Heart right ventricle (tissue), 16 donors: ENCODE measurements at regions of chrX and their contacts with region 1.

Region 1: GRCh38 chrX:23901805-23902204 is 5.9 kb downstream of the APOO start:
- DNase-seq: peak in 1 of 2 donors; percentile 54
- ATAC-seq: peak; percentile 86 to 95 (median 91)
- H3K4me3 ChIP-seq: peak overlapping the region in 6 of 10 donors; percentile 3 to 43 (median 34)
- H3K27ac ChIP-seq: peak overlapping the region in 9 of 10 donors; percentile 55 to 81 (median 70)
- H3K4me1 ChIP-seq: peaks cover 0 to 49% (median 19%) of the 10 kb centered on the region in 9 donors
- H3K27me3 ChIP-seq: peaks cover 0 to 19% (median 0%) of the 10 kb centered on the region in 7 donors
- CTCF ChIP-seq: peak; percentile 19 to 65 (median 42)

Region 2: DNA sequence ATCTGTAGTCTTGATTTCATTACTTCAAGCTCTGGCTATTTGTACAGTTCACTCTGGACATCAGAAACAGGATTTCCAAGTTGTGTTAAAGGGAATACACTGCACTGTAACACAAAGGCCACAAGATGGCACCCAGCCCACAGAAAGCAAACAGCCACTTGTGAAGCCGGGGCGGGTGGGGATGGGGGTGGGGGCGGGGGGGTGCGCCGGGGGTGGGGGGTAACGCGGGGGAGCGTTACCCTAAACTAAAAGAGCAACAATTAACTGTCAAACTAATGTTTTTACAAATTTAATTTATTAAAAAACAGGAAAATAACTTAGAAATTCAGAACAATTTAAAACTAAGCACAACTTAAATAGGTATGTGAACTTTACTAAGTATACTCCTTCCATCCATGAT is 207.2 kb before region 1 on chrX:
- intact Hi-C with region 1: loop called (anchors 2 to 10 kb)
- DNase-seq: peak in 1 of 2 donors; percentile 49
- ATAC-seq: peak in 3 of 8 donors; percentile 48 to 58 (median 53)
- H3K4me3 ChIP-seq: no peak overlapping the region
- H3K27ac ChIP-seq: no peak overlapping the region
- H3K4me1 ChIP-seq: peaks cover 0 to 3% (median 0%) of the 10 kb centered on the region in 9 donors
- H3K27me3 ChIP-seq: peaks cover 0 to 7% (median 0%) of the 10 kb centered on the region in 7 donors
- CTCF ChIP-seq: peak; percentile 16 to 66 (median 52)

Region 3: GRCh38 chrX:23756157-23756559 is 145.6 kb before region 1 on chrX:
- intact Hi-C with region 1: loop called in 7 of 10 experiments (anchors 1 to 10 kb)
- DNase-seq: peak; percentile 22 to 44
- ATAC-seq: peak in 1 of 8 donors; percentile 31
- H3K4me3 ChIP-seq: no peak overlapping the region
- H3K27ac ChIP-seq: no peak overlapping the region
- H3K4me1 ChIP-seq: peaks cover 0 to 5% (median 0%) of the 10 kb centered on the region in 9 donors
- H3K27me3 ChIP-seq: no peaks in the 10 kb centered on the region
- CTCF ChIP-seq: peak in 8 of 9 donors; percentile 30 to 62 (median 54)

Region 4: DNA sequence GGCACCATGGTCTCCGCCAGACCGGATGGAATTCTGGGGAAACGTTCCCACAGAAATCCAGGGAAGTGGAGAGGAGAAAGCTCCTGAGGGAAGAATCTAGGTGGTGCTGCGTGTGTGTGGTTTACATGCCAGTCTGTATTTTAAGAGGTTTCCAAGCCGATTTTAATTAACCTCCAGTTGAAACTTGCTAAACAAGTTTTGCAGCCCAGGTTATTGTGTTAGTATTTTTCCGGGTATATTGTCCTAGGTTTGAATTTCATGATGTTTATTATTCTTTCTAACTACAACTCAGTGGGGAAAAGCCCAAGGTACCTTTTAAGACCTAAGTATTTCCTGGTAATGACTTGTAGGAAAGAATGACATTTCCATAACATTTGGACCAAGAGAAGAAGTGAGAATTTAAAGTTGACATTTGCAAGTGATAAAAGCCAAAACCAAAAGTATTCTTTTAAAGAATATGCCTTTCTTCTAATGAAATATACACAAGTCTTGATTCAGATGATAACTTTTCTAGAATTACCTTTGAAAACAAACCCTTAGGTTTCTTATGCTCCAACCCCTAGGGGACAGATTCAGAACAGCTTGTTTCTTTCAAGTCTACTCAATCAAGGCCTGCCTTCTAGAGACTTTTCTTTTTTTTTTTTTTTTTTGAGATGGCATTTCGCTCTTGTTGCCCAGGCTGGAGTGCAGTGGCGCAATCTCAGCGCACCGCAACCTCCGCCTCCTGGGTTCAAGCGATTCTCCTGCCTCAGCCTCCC is 104.3 kb before region 1 on chrX:
- intact Hi-C with region 1: loop called in 1 of 10 experiments (anchors 5 kb)
- DNase-seq: no peak
- ATAC-seq: no peak
- H3K4me3 ChIP-seq: no peak overlapping the region
- H3K27ac ChIP-seq: peak overlapping the region in 8 of 10 donors; percentile 25 to 69 (median 57)
- H3K4me1 ChIP-seq: peaks cover 0 to 5% (median 0%) of the 10 kb centered on the region in 9 donors
- H3K27me3 ChIP-seq: no peaks in the 10 kb centered on the region
- CTCF ChIP-seq: no peak

Region 5: DNA sequence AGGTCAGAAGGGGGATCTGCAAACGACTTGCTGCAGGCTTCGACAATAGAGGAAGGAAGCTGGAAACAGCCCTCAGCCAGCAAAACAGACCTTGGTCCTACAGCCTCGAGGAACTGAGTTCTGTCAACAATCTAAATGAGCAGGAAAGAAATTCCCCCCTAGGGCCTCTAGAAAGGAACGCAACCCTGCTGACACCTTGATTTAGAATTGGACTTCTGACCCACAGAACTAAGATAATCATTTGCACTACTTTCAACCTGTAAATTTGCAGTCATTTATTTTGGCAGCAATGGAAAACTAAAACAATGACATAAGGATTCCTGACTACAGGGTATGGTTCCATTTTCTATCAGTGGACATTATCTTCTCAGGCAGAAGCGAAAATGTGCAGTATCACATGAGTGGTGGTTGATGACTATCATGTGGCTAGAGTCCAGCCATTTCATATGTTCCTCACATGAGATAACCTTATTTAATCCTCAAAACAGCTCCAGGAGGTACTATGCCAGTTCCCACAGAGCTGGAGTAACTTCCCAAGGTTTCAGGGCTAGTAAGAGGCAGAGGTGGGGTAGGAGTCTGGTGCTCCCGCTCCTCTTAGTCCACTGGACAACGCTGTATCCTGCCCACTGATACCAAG is 57.2 kb before region 1 on chrX:
- intact Hi-C with region 1: loop called in 1 of 10 experiments (anchors 10 kb)
- DNase-seq: peak in 1 of 2 donors; percentile 6
- ATAC-seq: peak in 5 of 8 donors; percentile 48 to 65 (median 55)
- H3K4me3 ChIP-seq: no peak overlapping the region
- H3K27ac ChIP-seq: peak overlapping the region in 7 of 10 donors; percentile 22 to 84 (median 56)
- H3K4me1 ChIP-seq: peaks cover 0 to 25% (median 7%) of the 10 kb centered on the region in 9 donors
- H3K27me3 ChIP-seq: peaks cover 0 to 5% (median 0%) of the 10 kb centered on the region in 7 donors
- CTCF ChIP-seq: no peak

Region 6: DNA sequence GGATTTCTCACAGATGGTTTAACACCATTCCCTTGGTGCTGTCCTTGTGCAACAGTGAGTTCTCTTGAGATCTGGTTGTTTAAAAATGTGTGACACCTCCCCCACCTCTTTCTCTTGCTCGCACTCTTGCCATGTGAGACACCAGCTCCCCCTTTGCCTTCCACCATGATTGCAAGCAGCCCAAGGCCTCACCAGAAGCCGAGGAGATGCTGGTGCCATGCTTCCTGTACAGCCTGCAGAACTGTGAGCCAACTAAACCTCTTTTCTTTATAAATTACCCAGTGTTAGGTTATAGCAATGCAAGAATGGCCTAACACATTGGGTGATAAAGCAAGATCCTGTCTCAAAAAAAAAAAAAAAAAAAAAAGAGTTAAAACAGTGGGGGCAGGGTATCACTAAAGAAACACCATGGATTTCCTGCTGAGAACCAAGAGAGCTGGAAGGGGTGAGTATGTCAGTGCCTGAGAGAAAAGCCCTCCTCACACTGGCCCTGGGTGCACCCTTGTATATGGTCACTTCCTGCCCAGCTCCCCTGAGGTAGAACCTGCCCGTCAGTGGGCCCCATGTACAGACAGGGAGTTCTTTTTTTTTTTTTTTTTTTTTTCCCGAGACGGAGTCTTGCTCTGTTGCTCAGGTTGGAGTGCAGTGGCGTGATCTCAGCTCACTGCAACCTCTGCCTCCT is 40.4 kb before region 1 on chrX:
- intact Hi-C with region 1: no loop called
- DNase-seq: no peak
- ATAC-seq: no peak
- H3K4me3 ChIP-seq: no peak overlapping the region
- H3K27ac ChIP-seq: no peak overlapping the region
- H3K4me1 ChIP-seq: no peaks in the 10 kb centered on the region
- H3K27me3 ChIP-seq: peaks cover 0 to 9% (median 0%) of the 10 kb centered on the region in 7 donors
- CTCF ChIP-seq: no peak

Region 7: DNA sequence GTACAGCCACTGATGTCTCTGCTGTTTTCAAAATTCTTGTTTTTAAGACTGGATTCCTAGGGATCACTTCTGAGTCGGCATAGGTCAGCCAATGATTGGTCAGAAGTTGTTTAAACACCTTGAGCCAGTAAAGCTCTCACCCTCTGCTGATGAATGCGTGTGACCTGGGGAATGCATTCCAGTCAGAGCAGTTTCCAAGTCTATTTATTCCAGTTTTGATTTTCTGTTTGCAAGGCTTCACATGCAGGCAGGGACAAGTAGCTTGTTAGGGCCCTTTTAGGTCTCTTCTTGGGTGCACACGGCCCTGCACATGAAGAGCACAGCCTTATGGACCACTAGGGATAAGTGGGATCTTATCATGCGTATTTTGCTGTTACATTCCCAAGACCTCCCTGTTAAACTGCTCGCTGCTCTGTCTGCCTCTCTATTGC is 78.2 kb after region 1 on chrX:
- intact Hi-C with region 1: no loop called
- DNase-seq: no peak
- ATAC-seq: no peak
- H3K4me3 ChIP-seq: no peak overlapping the region
- H3K27ac ChIP-seq: no peak overlapping the region
- H3K4me1 ChIP-seq: peaks cover 0 to 3% (median 0%) of the 10 kb centered on the region in 9 donors
- H3K27me3 ChIP-seq: peaks cover 0 to 81% (median 0%) of the 10 kb centered on the region in 7 donors
- CTCF ChIP-seq: no peak

Region 8: GRCh38 chrX:24002167-24002566 is 100.4 kb after region 1 on chrX:
- intact Hi-C with region 1: no loop called
- DNase-seq: no peak
- ATAC-seq: no peak
- H3K4me3 ChIP-seq: no peak overlapping the region
- H3K27ac ChIP-seq: no peak overlapping the region
- H3K4me1 ChIP-seq: no peaks in the 10 kb centered on the region
- H3K27me3 ChIP-seq: peaks cover 0 to 62% (median 0%) of the 10 kb centered on the region in 7 donors
- CTCF ChIP-seq: no peak

Region 9: DNA sequence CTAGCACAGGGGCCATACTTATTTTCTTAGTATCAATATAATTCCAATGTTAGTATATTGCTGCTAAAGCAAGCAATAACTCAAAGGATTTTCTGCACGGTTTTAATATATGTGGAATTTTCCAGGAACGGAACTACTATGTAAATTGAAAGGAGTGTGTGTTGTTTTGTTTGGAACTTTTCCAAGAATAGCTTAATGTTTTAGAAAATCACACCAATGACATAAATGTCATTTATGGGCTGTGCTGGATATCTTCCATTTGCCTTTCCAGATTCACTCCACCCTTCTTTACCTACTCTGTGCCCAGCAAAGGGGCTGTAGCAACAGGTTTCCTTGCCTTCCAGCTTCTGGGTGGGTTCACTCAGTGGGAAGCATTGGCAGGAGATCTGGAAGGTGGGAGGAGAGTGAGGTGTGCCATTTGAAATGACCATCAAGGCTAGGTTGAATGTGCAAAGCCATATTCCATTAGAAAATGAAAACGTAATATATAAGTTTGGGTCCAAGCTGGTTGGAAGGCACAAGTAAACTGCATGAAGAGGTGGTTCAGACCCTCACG is 222.5 kb after region 1 on chrX:
- intact Hi-C with region 1: no loop called
- DNase-seq: no peak
- ATAC-seq: no peak
- H3K4me3 ChIP-seq: no peak overlapping the region
- H3K27ac ChIP-seq: no peak overlapping the region
- H3K4me1 ChIP-seq: no peaks in the 10 kb centered on the region
- H3K27me3 ChIP-seq: peaks cover 0 to 47% (median 0%) of the 10 kb centered on the region in 7 donors
- CTCF ChIP-seq: no peak